Posterior cingulate gyrus (tissue), 11 donors: ENCODE measurements at regions of chr20 and their contacts with region 1.

Region 1: GRCh38 chr20:47886460-47887041 is 101.3 kb upstream of the SULF2 start:
- DNase-seq: peak in 2 of 10 donors; percentile 77 to 79

Region 2: DNA sequence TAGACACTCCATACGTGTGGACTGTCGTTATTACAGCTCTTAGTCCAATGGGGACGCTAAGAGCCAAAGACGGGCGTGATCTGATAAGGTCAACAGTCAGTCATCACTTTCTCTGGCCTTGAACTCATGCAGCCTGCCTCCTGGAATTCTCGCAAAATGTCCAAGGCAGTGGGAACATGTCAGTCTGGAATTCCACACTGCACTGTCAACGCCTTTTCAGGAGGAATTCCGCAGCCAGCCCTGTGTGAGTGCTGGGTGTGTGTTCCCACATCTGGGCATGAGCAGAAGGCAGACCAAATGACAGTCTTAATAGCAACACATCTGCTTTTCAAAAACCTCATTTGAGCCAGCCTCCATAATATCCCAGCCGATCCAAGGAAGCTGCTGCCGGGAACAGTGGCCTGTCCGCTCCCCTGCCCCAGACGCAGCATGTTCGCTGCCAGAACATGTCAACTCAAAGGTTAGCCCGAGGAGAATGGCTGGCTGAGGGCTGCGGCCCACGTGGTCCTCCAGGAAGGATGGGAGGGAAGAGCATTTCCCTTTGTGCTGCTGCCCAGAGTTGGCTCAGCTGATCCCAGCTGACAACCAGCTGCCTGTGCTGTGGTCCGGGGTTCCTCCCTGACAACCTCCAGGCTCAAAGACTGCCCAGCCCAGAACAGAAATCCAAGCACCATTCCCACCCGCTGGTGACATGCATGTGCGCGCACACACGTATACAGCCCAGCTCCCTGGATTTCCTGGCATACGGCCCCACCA is 204.3 kb before region 1 on chr20:
- intact Hi-C with region 1: no loop called
- DNase-seq: peak in 5 of 10 donors; percentile 23 to 85 (median 72)

Region 3: GRCh38 chr20:47767972-47768794 is 118.4 kb before region 1 on chr20:
- intact Hi-C with region 1: no loop called
- DNase-seq: no peak

Region 4: GRCh38 chr20:47778398-47779338 is 107.9 kb before region 1 on chr20:
- intact Hi-C with region 1: no loop called
- DNase-seq: no peak

Region 5: DNA sequence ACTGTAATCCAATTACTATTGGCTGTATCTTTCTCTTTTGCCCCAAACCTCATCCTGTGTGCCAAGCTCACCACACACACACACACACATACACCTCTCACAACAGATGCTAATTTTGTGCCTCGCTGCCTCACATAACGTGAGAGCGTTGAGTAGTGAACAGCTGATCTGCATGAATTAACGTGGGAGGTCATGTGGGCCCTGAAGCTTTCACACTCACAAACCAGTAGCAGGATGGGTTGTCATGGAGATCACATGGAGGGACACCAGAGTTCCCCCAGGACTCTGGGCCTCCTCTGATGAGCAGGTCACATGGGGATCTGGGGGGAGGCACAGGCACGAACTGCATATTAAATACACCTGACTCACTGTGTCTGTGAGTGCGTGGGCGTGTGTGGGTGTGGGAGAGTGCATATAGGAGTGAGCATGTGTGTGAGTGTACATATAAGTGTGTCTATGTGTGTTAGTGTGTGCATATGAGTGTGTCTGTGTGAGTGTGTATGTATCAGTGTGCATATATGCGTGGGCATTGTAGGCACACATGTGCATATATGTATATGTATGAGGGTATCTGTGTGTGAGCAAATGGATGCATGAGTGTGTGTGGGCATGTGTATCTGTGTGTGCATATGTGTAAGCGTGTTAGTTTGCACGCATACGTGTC is 38.6 kb before region 1 on chr20:
- intact Hi-C with region 1: loop called (anchors 10 kb)
- DNase-seq: no peak